PC-9 (cell line): ENCODE measurements at regions of chr20 and their contacts with region 1.

Region 1: DNA sequence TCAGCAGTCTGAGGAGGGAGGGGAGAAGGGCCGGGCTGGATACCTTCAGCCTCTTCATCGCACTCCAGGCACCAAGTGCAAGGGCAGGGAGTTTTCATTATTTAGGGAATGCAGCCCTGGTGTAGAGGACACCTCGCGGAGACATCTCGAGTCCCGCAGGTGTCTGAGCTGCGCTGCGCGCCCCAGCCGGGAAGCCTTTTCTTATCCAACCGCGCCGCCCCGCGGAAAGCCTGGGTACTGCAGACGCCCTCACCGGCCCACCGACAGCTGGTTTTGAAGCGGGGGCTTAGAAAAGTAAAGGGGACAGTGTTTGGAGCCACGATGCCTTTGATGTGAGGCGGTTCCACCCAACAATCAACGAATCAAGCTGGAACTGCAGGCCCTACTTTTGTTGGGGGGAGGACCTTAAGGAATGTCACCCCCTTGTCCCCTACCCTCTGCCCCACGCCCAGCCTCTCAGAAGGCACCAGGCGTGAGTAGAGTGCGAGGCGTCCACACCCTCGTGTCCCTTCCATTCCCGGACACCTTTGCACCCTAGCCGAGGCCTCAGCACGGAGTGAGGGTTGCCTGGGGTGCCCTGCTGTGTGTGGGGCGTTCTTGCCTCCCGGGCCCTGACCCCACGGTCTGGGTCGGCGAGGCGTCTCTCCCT is 8.6 kb downstream of the NKX2-2 start:
- DNase-seq: peak in 1 of 2 experiments; percentile 54
- H3K4me3 ChIP-seq: no peak overlapping the region
- H3K27ac ChIP-seq: no peak overlapping the region
- H3K4me1 ChIP-seq: no peaks in the 10 kb centered on the region
- H3K27me3 ChIP-seq: peaks cover 11% of the 10 kb centered on the region; the same call in 1 of the 2 replicates
- CTCF ChIP-seq: peak; percentile 97

Region 2: GRCh38 chr20:20837574-20838021 is 667.7 kb before region 1 on chr20:
- CTCF ChIA-PET with region 1: interaction called, 4 read pairs
- POLR2A ChIA-PET with region 1: no interaction called
- intact Hi-C with region 1: loop called (anchors 10 kb)
- DNase-seq: peak in 1 of 2 experiments; percentile 35
- H3K4me3 ChIP-seq: no peak overlapping the region
- H3K27ac ChIP-seq: no peak overlapping the region
- H3K4me1 ChIP-seq: no peaks in the 10 kb centered on the region
- H3K27me3 ChIP-seq: peaks cover 51% of the 10 kb centered on the region
- CTCF ChIP-seq: peak; percentile 79

Region 3: GRCh38 chr20:20860078-20860806 is 645.0 kb before region 1 on chr20:
- CTCF ChIA-PET with region 1: no interaction called
- POLR2A ChIA-PET with region 1: no interaction called
- intact Hi-C with region 1: loop called (anchors 1 kb)
- DNase-seq: peak; percentile 62 to 71
- H3K4me3 ChIP-seq: no peak overlapping the region
- H3K27ac ChIP-seq: no peak overlapping the region
- H3K4me1 ChIP-seq: no peaks in the 10 kb centered on the region
- H3K27me3 ChIP-seq: peaks cover 9% of the 10 kb centered on the region
- CTCF ChIP-seq: peak; percentile 89

Region 4: GRCh38 chr20:21048841-21049273 is 456.4 kb before region 1 on chr20:
- CTCF ChIA-PET with region 1: no interaction called
- POLR2A ChIA-PET with region 1: no interaction called
- intact Hi-C with region 1: loop called (anchors 2 kb)
- DNase-seq: peak in 1 of 2 experiments; percentile 39
- H3K4me3 ChIP-seq: no peak overlapping the region
- H3K27ac ChIP-seq: no peak overlapping the region
- H3K4me1 ChIP-seq: no peaks in the 10 kb centered on the region
- H3K27me3 ChIP-seq: peaks cover 58% of the 10 kb centered on the region
- CTCF ChIP-seq: peak; percentile 74

Region 5: DNA sequence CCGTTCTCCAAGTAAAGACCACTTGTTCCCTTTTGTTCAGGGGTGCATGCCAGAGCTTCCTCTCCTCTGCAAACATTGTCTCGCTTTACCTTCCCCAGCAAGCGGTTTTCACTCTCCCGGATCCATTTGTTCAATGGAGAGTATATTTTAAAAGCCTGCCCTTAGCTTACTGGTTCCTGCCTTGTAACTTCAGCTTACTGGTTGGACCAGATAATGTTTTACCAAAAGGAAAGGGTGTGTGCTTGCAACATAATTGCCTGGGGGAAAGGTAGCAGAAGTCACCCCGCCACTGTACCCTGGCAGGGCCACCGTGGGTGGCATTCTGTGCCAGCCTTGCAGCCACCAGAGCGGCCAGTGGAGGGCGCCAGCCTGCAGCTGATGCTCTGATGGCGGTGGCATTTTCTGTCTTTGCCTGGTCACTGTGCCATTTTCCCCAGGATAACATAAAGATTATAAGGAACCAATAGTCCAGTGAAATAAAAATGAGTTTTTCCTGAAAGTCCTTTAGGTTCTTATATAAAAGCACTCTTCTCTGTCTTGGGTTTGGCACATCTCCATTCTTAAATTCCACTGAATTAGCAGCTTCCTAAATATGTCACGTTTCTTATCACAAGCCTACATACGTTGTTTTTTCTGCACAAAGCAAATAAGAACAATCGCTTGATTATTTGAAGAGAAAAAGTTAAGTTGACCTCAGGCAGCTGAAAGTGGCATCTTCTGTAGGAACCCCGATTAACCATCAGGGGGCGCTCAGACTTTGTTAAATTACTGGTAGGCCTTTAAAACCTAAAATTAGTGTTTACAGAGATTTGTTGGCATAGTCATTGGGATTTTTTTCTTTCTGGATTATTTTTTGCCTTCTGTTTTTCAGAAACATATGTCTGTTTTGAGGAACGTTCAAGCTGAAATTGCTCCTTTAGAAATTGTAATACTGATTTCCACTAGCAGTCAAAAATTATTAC is 269.5 kb before region 1 on chr20:
- CTCF ChIA-PET with region 1: interaction called, 5 read pairs
- POLR2A ChIA-PET with region 1: no interaction called
- intact Hi-C with region 1: loop called (anchors 1 kb)
- DNase-seq: peak; percentile 72 to 78
- H3K4me3 ChIP-seq: no peak overlapping the region
- H3K27ac ChIP-seq: no peak overlapping the region
- H3K4me1 ChIP-seq: peaks cover 10% of the 10 kb centered on the region
- H3K27me3 ChIP-seq: no peaks in the 10 kb centered on the region
- CTCF ChIP-seq: peak; percentile 93

Region 6: DNA sequence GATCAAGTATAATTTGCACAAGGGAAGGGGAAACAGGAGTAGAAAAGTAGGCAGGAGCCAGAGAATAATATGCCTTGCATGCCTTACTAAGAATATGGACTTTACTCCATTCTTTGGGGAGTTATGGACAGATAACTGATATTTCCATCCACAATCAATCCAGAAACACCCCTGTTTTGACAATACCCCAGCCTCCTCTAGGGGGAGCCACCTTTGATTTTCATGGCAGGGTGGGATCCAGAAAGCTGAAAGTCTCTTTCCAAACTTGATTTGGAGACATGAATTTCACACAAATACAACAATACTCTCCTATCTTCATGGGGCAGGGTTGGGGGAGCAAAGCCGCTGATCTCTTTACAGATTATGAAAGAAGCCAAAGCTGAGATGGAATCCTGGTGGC is 675.0 kb after region 1 on chr20:
- CTCF ChIA-PET with region 1: no interaction called
- POLR2A ChIA-PET with region 1: no interaction called
- intact Hi-C with region 1: no loop called
- DNase-seq: no peak
- H3K4me3 ChIP-seq: no peak overlapping the region
- H3K27ac ChIP-seq: no peak overlapping the region
- H3K4me1 ChIP-seq: no peaks in the 10 kb centered on the region
- H3K27me3 ChIP-seq: no peaks in the 10 kb centered on the region
- CTCF ChIP-seq: peak; percentile 59